Right ventricle myocardium inferior (tissue), 1 donor: ENCODE measurements at regions of chr6 and their contacts with region 1.

Region 1: DNA sequence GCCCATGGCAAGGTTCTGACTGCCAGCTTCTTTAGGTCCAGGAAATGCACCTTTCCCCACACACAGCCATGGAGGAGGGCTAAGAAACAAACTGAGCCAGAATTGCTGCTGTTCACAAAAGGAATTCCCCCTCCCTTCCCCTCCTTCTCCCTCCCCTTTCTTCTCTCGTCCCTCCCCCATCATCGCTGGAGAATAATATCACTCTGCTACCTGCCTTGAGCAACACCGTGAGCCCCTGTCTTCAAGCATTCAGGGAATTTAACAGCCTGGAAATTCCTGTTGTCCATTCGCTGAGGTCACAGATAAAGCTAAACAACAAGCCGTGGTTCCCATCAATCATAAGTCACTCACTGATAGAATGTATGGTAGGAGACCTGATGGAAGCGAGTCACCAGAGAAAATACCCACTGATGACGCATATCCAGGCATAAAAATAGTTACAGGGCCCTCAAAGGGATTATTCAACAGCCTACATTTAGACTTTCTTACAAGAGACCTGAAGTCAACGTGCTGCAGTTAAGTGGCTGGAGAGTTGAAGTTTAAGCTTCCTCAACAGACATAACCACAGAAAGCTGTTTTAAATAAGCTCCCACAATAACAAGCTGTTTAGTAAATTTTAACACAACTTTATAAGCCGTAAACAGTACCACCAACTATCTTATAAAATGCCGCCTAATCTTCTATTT is 59.7 kb downstream of the HIVEP2 start:
- DNase-seq: no peak
- ATAC-seq: peak; percentile 90

Region 2: GRCh38 chr6:142692942-142693341 is 192.4 kb before region 1 on chr6:
- intact Hi-C with region 1: loop called (anchors 5 kb)
- DNase-seq: no peak
- ATAC-seq: peak; percentile 76

Region 3: GRCh38 chr6:142756215-142756634 is 129.1 kb before region 1 on chr6:
- intact Hi-C with region 1: loop called (anchors 5 kb)
- DNase-seq: no peak
- ATAC-seq: peak; percentile 73

Region 4: GRCh38 chr6:142833054-142833453 is 52.3 kb before region 1 on chr6:
- intact Hi-C with region 1: no loop called
- DNase-seq: no peak
- ATAC-seq: no peak

Region 5: DNA sequence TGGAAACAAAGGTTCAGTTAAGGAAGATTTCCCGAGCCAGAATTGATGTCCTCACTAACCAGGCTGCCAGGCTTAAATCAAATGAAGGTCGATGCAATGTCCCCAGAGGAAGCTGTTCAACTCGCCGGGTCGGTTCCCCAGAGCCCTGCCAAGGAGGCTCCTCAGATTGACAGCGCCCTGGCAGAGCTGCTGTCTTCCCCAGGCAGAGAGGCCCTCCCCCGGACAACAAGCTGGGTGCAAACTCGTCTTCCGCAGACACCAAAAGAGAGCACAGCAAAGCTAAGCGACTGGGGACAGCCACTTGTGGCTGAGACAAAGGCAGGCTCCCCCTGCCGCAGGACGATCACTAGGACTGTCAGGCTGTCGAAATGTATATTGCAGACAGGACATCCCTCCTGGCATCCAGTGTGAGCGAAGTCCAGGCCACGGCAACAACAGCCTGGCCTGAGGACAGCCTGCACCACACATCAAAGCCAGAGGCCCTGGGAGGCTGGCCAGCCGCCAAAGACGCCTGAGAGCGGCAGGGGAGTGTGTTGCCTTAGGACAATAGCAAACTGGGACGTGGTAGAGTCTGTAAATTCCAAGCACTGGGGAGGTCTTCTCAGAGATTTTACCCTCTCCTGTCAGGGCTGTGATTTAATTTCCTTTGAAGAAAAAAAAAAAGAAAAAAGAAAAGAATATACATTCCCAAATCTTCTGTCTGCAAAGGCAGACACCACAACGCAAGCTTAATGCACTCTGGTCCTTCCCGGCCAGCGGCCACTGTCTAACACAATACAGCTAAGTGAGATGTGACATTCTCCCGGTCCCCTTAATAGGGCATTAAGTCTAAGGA is 39.5 kb before region 1 on chr6:
- intact Hi-C with region 1: loop called (anchors 2 kb)
- DNase-seq: peak; percentile 95
- ATAC-seq: peak; percentile 95

Region 6: DNA sequence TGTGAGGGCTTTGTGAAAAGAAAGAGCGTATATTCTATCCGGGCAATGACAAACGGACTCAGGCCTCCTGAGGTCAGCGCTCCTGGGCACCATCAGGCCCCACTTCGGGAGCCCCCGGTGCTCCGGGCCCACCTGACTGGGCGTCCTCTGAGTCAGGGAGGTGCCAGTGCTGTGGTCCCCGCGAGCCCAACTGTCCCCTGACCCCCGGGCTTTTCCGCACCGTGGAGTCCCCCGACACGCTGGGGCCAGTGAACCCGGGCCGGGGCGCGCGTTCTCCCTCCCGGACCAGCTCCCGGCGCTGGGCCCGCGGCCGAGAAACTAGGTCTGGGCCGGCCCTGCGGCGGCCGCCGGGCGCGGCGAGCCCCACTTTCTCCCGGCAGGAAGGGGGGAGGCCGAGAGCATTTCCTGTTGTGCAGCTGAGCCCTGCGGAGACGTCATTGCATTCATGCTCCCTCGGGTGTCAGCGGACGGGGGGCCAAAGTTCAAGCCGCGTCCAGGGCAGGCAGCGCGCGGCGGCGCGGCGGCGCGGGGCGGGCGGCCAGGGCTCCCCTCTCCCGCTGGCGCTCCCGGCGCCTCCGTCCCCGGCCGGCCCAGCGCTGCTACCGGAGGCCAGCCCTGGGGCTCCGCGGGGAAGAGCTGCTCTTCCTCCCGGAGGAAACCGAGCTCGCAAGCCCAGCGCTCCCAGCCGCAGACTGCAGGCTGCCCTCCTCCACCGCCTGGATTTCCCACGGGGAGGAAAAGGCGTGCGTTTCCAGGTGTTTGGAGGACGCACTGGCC is 41.4 kb after region 1 on chr6:
- intact Hi-C with region 1: loop called (anchors 5 kb)
- DNase-seq: peak; percentile 90
- ATAC-seq: peak; percentile 90